Activated CD8-positive, alpha-beta memory T cell treated with anti-CD3 and anti-CD28 coated beads, Interleukin-2, amount 10 ng/mL, durations not matched to agents 7 days and 5 days (primary cell): ENCODE measurements at regions of chr19 and their contacts with region 1.

Region 1: GRCh38 chr19:19404879-19405860 is at the start of gene GATAD2A:
- DNase-seq: peak; percentile 92
- ATAC-seq: peak; percentile 83
- H3K4me3 Mint-ChIP-seq: peak within 1 kb of the TSS; percentile 91
- H3K27ac Mint-ChIP-seq: peak within 1 kb of the TSS; percentile 94
- H3K4me1 Mint-ChIP-seq: peaks cover 65% of the 10 kb centered on the region
- H3K27me3 Mint-ChIP-seq: no peaks in the 10 kb centered on the region
- total RNA-seq, gene GATAD2A: 159 to 161 TPM

Region 2: GRCh38 chr19:19361075-19361594 is 44.0 kb before region 1 on chr19:
- CTCF ChIA-PET with region 1: interaction called, 15 read pairs
- DNase-seq: peak; percentile 85
- ATAC-seq: peak; percentile 71
- H3K4me3 Mint-ChIP-seq: no peak overlapping the region
- H3K27ac Mint-ChIP-seq: no peak overlapping the region
- H3K4me1 Mint-ChIP-seq: peaks cover 33% of the 10 kb centered on the region
- H3K27me3 Mint-ChIP-seq: no peaks in the 10 kb centered on the region

Region 3: GRCh38 chr19:19366612-19367396 is 38.4 kb before region 1 on chr19:
- CTCF ChIA-PET with region 1: interaction called, 15 read pairs
- DNase-seq: peak; percentile 86
- ATAC-seq: peak; percentile 90
- H3K4me3 Mint-ChIP-seq: peak overlapping the region; percentile 45
- H3K27ac Mint-ChIP-seq: peak overlapping the region; percentile 57
- H3K4me1 Mint-ChIP-seq: peaks cover 25% of the 10 kb centered on the region
- H3K27me3 Mint-ChIP-seq: no peaks in the 10 kb centered on the region

Region 4: DNA sequence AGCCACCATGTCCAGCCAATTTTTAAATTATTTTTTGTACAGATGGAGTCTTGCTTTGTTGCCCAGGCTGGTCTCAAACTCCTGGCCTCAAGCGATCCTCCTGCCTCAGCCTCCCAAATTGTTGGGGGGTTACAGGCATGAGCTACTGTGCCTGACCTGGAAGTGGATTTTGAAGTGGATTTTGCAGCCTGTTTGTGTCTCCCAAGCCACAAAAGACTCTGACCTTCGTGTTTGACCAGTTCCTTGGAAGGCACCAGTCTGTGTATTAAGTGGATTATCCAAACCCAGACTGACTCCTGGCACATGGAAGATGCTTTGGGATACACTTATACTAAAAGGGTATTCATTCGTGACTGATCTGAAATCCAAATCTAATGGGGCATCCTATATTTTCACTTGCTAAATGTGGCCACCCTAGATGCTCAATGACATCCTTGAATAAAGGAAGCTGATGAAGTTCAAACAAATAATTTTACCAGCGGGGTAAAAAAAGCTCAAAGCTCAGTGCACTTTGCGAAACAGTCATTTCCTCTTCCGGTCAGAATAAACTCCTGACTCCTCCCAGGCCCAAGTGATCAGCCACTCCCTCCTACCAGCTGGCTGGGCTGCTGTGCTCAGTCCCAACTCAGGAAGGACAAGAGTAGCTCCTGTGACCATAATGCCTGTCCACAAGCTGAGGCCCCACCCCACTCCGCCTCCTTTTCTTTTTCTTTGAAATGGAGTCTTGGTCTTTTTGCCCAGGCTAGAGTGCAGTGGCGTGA is 32.3 kb before region 1 on chr19:
- CTCF ChIA-PET with region 1: interaction called, 12 read pairs
- DNase-seq: peak; percentile 79
- ATAC-seq: peak; percentile 99
- H3K4me3 Mint-ChIP-seq: peak overlapping the region; percentile 23
- H3K27ac Mint-ChIP-seq: peak overlapping the region; percentile 94
- H3K4me1 Mint-ChIP-seq: peaks cover 11% of the 10 kb centered on the region
- H3K27me3 Mint-ChIP-seq: no peaks in the 10 kb centered on the region